ENCODE measurements at regions of chr19 and their contacts with region 1.

Region 1: DNA sequence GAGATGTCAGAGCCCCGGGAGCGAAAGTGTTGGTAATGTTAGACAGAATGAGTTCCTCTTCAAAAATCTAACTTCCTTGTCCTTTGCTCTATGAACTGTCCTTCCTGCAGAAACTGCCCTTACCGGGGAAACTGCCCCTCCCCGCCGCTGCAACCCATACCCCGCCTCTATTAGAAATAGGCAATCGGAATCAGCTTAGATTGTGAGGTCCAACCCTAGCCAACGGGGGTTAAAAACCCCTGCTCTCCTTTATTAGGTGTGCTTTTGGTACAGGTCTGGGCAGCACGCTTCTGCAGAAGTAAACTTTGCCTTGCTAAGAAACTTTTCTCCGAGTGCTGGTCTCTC is 11.5 kb upstream of the CAPNS1 start:
- DNase-seq: no peak
- H3K4me3 ChIP-seq: peak overlapping the region; percentile 57
- CTCF ChIP-seq: no peak

Region 2: GRCh38 chr19:35856546-35857149 is 271.7 kb before region 1 on chr19 and contains the start of gene KIRREL2:
- CTCF ChIA-PET with region 1: no interaction called
- POLR2A ChIA-PET with region 1: no interaction called
- DNase-seq: no peak
- H3K4me3 ChIP-seq: peak within 1 kb of the TSS; percentile 47
- CTCF ChIP-seq: no peak

Region 3: GRCh38 chr19:36060430-36060829 is 67.9 kb before region 1 on chr19:
- CTCF ChIA-PET with region 1: interaction called, 15 read pairs
- POLR2A ChIA-PET with region 1: no interaction called
- DNase-seq: no peak
- H3K4me3 ChIP-seq: no peak overlapping the region
- CTCF ChIP-seq: peak; percentile 89

Region 4: DNA sequence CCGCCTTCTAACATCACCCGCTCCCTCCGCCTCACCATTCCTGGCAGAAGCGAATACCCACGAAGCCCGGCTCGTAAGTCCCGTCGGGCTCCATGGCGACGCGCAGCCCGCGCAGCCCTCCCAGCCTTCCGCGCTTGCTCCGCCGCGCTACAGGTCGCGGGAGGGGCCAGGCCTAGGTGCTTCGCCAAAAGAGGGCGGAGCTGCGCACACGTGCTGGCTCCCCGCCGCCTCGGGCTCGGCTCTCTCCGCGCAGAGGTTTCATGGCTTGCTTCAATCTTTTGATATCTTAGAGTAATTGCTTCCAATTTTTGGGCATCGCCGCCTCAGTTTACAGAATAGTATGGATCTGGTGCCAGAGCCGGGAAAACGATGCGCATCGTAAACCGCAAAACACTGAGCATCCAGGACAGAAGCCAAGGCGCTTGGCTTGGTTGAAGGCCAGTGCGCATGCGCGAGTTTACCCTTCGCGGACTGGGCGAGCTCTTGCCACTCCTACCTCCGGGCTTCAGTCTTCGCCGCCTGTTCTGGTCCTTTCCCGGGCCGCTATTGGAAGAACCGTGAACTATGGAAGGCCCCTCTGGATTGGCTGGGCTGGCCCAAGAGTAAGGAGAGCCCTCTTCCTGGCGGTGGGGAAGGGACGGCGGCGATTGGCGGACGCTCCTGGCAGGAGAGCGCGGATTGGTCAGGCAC is 13.5 kb before region 1 on chr19 and contains the start of gene POLR2I:
- CTCF ChIA-PET with region 1: interaction called, 39 read pairs
- POLR2A ChIA-PET with region 1: interaction called, 6 read pairs
- DNase-seq: peak; percentile 99
- H3K4me3 ChIP-seq: peak within 1 kb of the TSS; percentile 92
- CTCF ChIP-seq: no peak

Region 5: DNA sequence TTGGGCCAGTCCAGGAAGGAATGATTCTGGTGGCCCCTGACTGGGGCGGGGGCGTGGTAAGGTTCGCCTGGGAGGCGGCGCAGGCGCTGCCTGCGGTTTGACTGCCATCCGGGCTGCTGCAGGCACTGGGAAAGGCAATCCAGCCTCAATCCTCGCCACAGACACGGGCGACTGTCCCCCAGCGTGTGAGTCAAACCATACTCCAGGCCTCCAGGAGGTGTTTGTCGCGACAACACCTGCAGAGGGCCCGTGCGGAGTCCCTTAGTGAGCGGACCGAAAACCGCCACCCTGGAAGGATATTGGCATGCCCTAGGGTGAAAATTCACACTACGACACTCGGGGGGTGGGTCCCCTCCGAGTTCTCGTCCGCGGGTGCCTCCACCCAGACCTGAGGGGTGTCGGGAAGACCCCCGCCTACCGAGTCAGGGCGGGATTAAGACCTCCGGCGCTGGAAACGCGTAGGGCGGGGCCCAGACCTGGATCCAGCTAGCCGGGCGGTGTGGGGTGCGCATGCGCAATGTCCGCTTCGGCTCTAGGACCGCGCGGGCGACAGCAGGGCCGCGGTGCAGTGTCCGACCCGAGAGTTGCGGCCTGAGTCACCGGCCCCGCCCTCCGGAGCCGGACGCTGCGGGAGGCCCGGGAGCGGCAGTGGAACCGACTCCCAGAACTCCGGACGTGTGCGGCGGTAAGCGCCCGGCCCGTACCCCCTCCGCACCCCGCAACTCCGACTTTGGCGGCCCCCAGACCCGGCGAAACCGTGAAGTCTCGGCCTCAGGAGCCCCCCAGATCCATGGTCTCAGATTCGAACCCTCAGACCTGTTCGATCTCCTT is 11.3 kb after region 1 on chr19 and contains the start of gene CAPNS1:
- CTCF ChIA-PET with region 1: interaction called, 26 read pairs
- POLR2A ChIA-PET with region 1: interaction called, 19 read pairs
- DNase-seq: peak; percentile 52
- H3K4me3 ChIP-seq: peak within 1 kb of the TSS; percentile 96
- CTCF ChIP-seq: no peak

Region 6: DNA sequence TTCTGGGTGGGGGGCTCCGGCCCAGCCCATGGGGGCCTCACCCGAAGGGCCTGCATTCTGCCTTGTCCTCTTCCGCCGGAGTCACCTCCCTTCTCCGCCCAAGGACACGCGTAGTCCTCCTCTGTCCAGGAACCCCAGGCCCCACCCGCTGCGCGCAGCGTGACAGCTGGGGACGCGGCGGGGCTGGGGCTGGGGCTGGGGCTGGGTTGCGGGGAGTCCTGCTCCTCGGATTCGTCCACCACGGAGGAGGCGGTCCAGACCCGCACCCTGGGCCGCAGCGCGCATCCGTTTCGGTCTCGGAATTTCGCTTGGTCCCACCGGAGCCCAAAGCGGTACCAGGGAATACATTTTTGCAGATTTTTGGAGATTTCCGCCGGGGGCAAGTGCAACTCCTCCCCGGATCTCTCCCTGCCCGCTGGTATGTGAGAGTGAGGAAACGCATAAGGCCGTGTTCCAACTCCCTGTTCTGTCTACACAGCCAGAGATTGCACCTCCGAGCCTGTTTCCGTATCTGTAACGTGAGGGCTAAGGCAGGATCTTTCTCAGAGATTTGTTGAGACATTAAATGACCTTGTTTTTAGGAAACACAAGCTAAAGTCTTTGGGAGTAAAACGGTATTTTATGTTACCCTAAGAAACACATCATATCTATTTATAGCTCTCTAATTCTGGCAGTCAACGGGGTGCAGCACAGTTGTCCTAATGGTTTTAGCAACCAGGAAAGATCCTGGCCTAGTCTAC is 24.2 kb after region 1 on chr19 and contains the start of gene COX7A1:
- CTCF ChIA-PET with region 1: interaction called, 10 read pairs
- POLR2A ChIA-PET with region 1: no interaction called
- DNase-seq: no peak
- H3K4me3 ChIP-seq: peak within 1 kb of the TSS; percentile 27
- CTCF ChIP-seq: no peak

Region 7: GRCh38 chr19:36169084-36169760 is 40.9 kb after region 1 on chr19:
- CTCF ChIA-PET with region 1: interaction called, 152 read pairs
- POLR2A ChIA-PET with region 1: interaction called, 4 read pairs
- DNase-seq: no peak
- H3K4me3 ChIP-seq: no peak overlapping the region
- CTCF ChIP-seq: no peak

Region 8: GRCh38 chr19:36267061-36267845 is 138.9 kb after region 1 on chr19:
- CTCF ChIA-PET with region 1: no interaction called
- POLR2A ChIA-PET with region 1: no interaction called
- DNase-seq: no peak
- H3K4me3 ChIP-seq: no peak overlapping the region
- CTCF ChIP-seq: no peak

Measured in AG04449 (cell line).